ENCODE measurements at regions of chr10 and their contacts with region 1.

Region 1: DNA sequence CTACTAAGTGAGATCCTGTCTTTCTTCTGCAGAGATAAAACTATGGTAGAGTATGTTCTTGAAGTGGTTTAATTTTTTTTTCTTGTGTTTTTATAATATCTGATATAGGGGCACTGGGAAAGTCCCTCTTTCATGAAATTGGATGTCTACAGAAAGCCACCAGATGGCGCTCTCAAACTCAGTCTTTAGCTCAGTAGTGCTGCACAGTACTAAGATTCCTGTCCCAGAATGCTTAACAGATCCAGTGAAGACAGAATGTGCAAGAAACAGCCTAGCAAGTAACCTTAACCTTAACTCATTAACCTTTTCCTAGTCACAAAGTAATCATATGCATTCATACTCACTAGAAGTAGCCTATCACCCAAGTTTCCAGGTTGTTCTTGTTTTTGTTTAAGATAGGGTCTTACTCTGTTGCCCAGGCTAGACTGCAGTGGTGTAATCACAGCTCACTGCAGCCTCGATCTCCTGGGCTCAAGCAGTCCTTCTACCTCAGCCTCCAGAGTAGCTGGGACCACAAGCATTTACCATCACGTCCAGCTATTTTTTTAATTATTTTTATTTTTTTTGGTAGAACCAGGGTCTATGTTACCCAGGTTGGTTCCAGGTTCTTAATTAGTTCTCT is 56.7 kb downstream of the IDE start:
- DNase-seq: peak; percentile 45
- H3K4me3 ChIP-seq: no peak overlapping the region
- H3K27ac ChIP-seq: no peak overlapping the region
- H3K4me1 ChIP-seq: no peaks in the 10 kb centered on the region
- H3K27me3 ChIP-seq: no peaks in the 10 kb centered on the region
- CTCF ChIP-seq: peak; percentile 70 to 73

Region 2: GRCh38 chr10:92419740-92420545 is 97.2 kb before region 1 on chr10:
- CTCF ChIA-PET with region 1: no interaction called
- dilution Hi-C with region 1: no loop called
- in situ Hi-C with region 1: no loop called
- intact Hi-C with region 1: no loop called
- DNase-seq: no peak
- H3K4me3 ChIP-seq: no peak overlapping the region
- H3K27ac ChIP-seq: no peak overlapping the region
- H3K4me1 ChIP-seq: peaks cover 3% of the 10 kb centered on the region
- H3K27me3 ChIP-seq: peaks cover 5% of the 10 kb centered on the region
- CTCF ChIP-seq: peak in 1 of 2 donors; percentile 26

Region 3: GRCh38 chr10:92592761-92593618 is 75.8 kb after region 1 on chr10 and contains the start of gene KIF11:
- CTCF ChIA-PET with region 1: no interaction called
- dilution Hi-C with region 1: no loop called
- in situ Hi-C with region 1: no loop called
- intact Hi-C with region 1: loop called (anchors 5 kb)
- DNase-seq: peak; percentile 95
- H3K4me3 ChIP-seq: peak within 1 kb of the TSS; percentile 62 to 94 (median 87)
- H3K27ac ChIP-seq: peak within 1 kb of the TSS; percentile 87
- H3K4me1 ChIP-seq: peaks cover 17% of the 10 kb centered on the region
- H3K27me3 ChIP-seq: no peaks in the 10 kb centered on the region
- CTCF ChIP-seq: no peak
- total RNA-seq, gene KIF11: 2.7 to 22.4 TPM

Region 4: GRCh38 chr10:92619368-92619767 is 102.2 kb after region 1 on chr10:
- CTCF ChIA-PET with region 1: no interaction called
- dilution Hi-C with region 1: no loop called
- in situ Hi-C with region 1: no loop called
- intact Hi-C with region 1: no loop called
- DNase-seq: no peak
- H3K4me3 ChIP-seq: no peak overlapping the region
- H3K27ac ChIP-seq: no peak overlapping the region
- H3K4me1 ChIP-seq: no peaks in the 10 kb centered on the region
- H3K27me3 ChIP-seq: no peaks in the 10 kb centered on the region
- CTCF ChIP-seq: no peak

Region 5: GRCh38 chr10:92640110-92640509 is 123.0 kb after region 1 on chr10:
- CTCF ChIA-PET with region 1: no interaction called
- dilution Hi-C with region 1: no loop called
- in situ Hi-C with region 1: no loop called
- intact Hi-C with region 1: loop called (anchors 5 kb)
- DNase-seq: peak; percentile 8
- H3K4me3 ChIP-seq: no peak overlapping the region
- H3K27ac ChIP-seq: no peak overlapping the region
- H3K4me1 ChIP-seq: no peaks in the 10 kb centered on the region
- H3K27me3 ChIP-seq: no peaks in the 10 kb centered on the region
- CTCF ChIP-seq: peak in 1 of 2 donors; percentile 20

Region 6: GRCh38 chr10:92848441-92849233 is 331.5 kb after region 1 on chr10 and contains the start of gene EXOC6:
- CTCF ChIA-PET with region 1: interaction called, 5 read pairs
- dilution Hi-C with region 1: no loop called
- in situ Hi-C with region 1: loop called in 1 of 2 experiments (anchors 25 kb)
- intact Hi-C with region 1: no loop called
- DNase-seq: peak; percentile 78
- H3K4me3 ChIP-seq: peak within 1 kb of the TSS; percentile 73 to 82 (median 80)
- H3K27ac ChIP-seq: peak within 1 kb of the TSS; percentile 1
- H3K4me1 ChIP-seq: peaks cover 18% of the 10 kb centered on the region
- H3K27me3 ChIP-seq: no peaks in the 10 kb centered on the region
- CTCF ChIP-seq: no peak
- total RNA-seq, gene EXOC6: 3.5 to 4.6 TPM

Measured in mammary epithelial cell (primary cell).